ENCODE measurements at regions of chr12 and their contacts with region 1.

Region 1: DNA sequence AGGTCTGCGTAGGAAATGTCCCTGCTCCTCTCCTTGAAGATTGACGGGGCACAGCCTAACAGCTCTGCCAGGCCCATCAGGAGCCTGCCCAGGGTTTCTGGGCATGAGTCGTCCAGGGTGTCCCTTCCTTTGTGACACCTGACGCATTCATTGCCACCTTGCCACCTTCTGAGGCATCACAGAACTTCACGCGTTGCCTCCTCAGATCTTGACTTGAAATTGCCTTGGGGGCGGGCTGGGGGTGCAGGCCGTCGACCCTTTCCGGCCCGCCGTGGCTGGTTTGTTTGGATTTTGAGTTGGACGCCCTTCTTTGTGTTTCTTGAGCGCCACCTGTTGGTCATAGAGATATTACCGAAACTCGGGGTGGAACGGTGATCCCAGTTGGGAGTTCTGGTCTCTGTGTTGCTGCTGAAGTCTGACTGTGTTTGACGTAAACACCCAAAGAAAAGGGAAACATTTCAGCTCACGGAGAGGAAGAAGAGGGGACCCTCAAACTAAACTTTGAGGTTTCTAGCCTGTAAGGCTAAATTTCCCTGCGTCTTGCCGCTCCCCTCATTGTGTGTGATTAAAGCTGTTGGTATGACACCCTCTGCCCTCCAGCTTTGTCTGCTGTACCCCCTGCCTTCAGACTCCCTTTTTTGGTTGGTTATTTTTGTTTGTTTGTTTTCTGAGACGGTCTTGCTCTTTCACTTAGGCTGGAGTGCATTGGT is 44.6 kb downstream of the MLXIP start:
- DNase-seq: peak; percentile 84
- ATAC-seq: peak; percentile 80
- H3K4me3 Mint-ChIP-seq: no peak overlapping the region
- H3K27ac Mint-ChIP-seq: peak overlapping the region; percentile 61
- H3K4me1 Mint-ChIP-seq: peaks cover 42% of the 10 kb centered on the region
- H3K27me3 Mint-ChIP-seq: no peaks in the 10 kb centered on the region
- CTCF ChIP-seq: peak; percentile 88

Region 2: DNA sequence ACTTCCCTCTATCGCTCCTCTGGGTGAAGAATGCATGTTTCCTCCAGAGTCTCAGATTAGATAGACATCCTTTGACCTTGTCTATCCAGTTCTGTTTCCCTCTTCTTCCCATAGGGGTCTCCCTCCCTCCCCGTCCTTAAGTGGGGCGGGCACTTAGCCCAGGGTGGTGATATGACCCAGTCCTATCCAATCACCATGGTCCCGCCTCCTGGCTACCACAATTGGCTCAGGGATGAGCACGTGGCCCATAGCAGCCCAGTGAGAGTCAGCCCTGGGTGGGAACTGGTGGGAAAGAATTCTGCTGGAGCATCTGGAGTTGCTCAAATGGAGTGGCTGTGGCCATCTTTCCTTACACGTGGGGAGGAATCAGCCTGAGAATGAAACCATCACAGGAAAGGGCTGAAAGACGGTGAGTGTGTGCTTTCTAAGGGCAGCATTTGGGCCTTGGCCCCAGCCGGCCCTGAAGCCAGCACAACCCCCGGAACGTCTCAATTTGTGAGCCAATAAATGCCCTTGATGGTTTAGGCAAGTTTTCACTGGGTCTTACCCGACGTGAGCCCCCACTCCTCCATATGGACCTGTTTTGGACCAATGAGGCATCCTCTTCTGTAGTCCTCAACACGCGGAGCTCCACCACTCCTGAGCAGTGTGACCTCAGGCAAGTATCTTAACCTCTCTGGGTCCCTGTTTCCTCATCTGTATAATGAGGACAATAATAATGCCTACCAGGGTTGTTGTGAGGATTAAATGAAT is 59.0 kb before region 1 on chr12:
- CTCF ChIA-PET with region 1: interaction called, 41 read pairs
- POLR2A ChIA-PET with region 1: no interaction called
- intact Hi-C with region 1: no loop called
- DNase-seq: peak; percentile 74
- ATAC-seq: peak; percentile 95
- H3K4me3 Mint-ChIP-seq: no peak overlapping the region
- H3K27ac Mint-ChIP-seq: no peak overlapping the region
- H3K4me1 Mint-ChIP-seq: peaks cover 17% of the 10 kb centered on the region
- H3K27me3 Mint-ChIP-seq: no peaks in the 10 kb centered on the region
- CTCF ChIP-seq: no peak

Region 3: GRCh38 chr12:122090759-122091515 is 32.3 kb before region 1 on chr12:
- CTCF ChIA-PET with region 1: interaction called, 21 read pairs
- POLR2A ChIA-PET with region 1: interaction called, 3 read pairs
- intact Hi-C with region 1: no loop called
- DNase-seq: no peak
- ATAC-seq: no peak
- H3K4me3 Mint-ChIP-seq: no peak overlapping the region
- H3K27ac Mint-ChIP-seq: no peak overlapping the region
- H3K4me1 Mint-ChIP-seq: peaks cover 30% of the 10 kb centered on the region
- H3K27me3 Mint-ChIP-seq: no peaks in the 10 kb centered on the region
- CTCF ChIP-seq: no peak

Region 4: DNA sequence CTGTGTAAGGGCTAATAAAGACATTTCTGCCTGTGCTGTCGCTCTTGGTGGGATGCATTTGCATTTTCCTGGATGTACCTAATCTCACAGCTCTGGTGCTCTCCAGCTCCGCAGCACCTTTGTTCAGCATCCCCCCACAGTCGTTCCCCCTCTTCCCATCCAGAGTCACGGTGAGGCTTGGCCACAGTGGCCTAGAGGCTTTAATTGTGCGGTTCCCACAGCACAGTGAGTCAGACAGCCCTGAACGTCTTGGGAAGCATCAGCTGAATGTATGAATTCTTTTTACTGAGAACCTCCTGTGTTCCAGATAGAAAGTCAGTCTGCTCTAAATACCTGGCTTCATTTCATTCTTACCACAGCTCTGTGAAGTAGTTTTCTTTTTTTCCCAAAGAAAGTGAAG is 15.9 kb before region 1 on chr12:
- CTCF ChIA-PET with region 1: interaction called, 15 read pairs
- POLR2A ChIA-PET with region 1: interaction called, 3 read pairs
- intact Hi-C with region 1: no loop called
- DNase-seq: no peak
- ATAC-seq: no peak
- H3K4me3 Mint-ChIP-seq: no peak overlapping the region
- H3K27ac Mint-ChIP-seq: peak overlapping the region; percentile 88
- H3K4me1 Mint-ChIP-seq: peaks cover 73% of the 10 kb centered on the region
- H3K27me3 Mint-ChIP-seq: no peaks in the 10 kb centered on the region
- CTCF ChIP-seq: no peak

Region 5: DNA sequence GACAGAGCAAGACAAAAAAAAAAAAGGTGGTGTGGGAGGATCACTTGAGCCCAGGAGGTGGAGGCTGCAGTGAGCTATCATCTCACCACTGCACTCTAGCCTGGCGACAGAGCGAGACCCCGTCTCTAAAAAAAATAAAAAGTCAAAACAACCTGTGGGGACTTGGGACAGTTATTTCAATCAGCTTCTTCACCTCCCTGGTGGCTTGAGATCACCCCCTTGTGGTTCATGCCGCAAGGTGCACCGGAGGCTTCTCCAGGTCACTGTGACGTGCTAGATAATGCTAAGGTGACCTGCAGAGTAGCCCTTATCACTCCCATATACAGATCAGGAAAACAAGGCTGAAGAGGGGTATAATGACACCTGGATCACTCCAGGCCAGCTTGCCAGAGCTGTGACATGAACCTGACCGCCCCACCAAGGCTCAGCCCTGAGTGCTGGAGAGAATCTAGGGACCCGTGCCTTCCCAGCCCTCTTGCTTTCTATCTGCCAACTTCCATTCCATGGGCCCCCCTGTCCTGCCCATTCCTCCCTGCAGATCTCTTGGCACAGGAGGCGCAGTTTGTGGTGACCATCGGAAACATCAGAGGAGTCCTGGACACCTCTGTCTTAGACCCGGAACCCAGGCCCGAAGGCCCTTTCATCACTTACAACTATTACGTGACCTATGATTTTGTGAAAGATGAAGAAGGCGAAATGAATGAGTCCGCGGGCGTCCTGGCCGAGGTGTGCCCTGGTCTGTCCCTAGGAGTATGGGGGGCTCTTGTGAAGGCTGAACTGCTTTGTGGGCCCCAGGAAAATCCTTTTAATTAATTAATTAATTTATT is 67.8 kb after region 1 on chr12:
- CTCF ChIA-PET with region 1: interaction called, 24 read pairs
- POLR2A ChIA-PET with region 1: no interaction called
- intact Hi-C with region 1: no loop called
- DNase-seq: peak; percentile 87
- ATAC-seq: peak; percentile 98
- H3K4me3 Mint-ChIP-seq: no peak overlapping the region
- H3K27ac Mint-ChIP-seq: no peak overlapping the region
- H3K4me1 Mint-ChIP-seq: no peaks in the 10 kb centered on the region
- H3K27me3 Mint-ChIP-seq: peaks cover 3% of the 10 kb centered on the region
- CTCF ChIP-seq: peak; percentile 78